Activated CD4-positive, alpha-beta memory T cell treated with anti-CD3 and anti-CD28 coated beads for 36 hours (primary cell): ENCODE measurements at regions of chr13 and their contacts with region 1.

Region 1: DNA sequence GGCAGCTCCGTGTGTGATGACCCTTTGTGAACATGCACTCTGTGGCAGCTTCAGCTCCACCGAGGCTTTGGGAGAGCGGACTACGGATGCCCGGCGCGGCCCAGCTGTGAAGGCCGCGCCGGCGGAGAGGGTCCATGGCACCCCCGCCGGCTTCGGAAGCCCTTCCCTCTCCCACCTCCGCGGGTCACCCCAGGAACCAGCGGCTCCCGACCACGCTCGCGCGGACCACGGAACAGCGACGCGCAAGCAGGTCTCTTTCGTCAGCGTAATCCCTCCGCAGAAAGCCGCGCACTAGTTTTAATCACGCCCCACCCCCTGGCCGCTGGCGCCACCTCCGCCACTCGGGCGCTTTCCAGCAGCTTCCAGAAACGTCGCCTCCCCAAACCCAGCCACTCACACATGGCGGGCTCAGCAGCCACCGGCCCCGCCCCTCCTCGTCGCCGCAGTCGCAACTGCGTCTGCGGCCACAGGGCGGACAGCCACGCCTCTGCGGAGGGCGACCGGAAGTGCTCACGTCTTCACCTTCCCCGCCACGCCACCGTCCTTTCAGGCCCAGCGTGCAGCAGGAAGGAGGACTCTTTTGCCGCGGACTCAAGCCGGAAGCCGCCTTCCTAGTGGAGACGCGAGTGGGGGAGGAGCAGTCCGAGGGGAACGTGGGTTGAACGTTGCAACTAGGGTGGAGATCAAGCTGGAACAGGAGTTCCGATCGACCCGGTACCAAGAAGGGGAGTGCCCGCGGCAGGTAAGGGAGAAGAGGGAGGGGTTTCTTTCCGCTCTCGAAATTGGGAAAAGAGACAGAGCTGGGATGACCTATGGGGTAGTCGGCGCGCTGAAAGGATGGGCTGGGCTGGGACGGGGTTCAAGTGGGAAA is at the start of gene USPL1:
- DNase-seq: peak; percentile 99
- H3K4me3 Mint-ChIP-seq: no peak within 1 kb of the TSS
- H3K27ac Mint-ChIP-seq: no peak within 1 kb of the TSS
- H3K4me1 Mint-ChIP-seq: peaks cover 26% of the 10 kb centered on the region
- H3K27me3 Mint-ChIP-seq: no peaks in the 10 kb centered on the region
- total RNA-seq, gene USPL1: 13.3 to 13.8 TPM

Region 2: GRCh38 chr13:30132623-30133553 is 484.7 kb before region 1 on chr13:
- CTCF ChIA-PET with region 1: interaction called, 12 read pairs
- POLR2A ChIA-PET with region 1: no interaction called
- intact Hi-C with region 1: no loop called
- DNase-seq: peak; percentile 98
- H3K4me3 Mint-ChIP-seq: no peak overlapping the region
- H3K27ac Mint-ChIP-seq: no peak overlapping the region
- H3K4me1 Mint-ChIP-seq: peaks cover 11% of the 10 kb centered on the region
- H3K27me3 Mint-ChIP-seq: no peaks in the 10 kb centered on the region

Region 3: DNA sequence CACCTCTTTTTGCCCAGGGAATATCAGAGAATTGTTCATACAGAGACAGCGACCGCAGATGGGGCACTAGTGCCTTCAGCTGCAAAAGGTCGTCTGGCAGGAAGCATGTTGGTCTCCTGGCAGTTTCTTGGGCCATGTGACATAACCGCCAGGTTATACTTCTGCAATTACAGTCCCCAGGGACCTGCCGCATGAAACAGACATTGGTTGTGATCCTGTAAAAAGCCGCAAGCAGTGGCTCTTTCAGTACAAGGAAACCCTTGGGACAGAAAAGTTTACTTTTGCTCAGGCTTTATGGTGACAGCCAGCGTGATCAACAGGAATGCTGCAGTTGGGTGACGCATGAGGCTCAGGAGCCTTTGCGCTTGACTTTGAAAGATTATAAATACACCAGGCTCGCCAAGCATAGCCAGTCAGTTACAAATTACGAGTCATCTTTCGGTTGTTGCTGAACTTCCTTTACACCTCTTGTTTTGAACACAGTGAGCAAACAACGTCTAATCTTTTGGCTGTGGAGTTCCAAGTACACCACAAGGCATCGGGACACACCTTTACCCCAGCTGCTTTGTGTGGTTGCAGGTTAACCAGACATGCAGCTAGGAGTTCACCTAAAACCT is 245.8 kb before region 1 on chr13:
- CTCF ChIA-PET with region 1: no interaction called
- POLR2A ChIA-PET with region 1: interaction called, 9 read pairs
- intact Hi-C with region 1: loop called (anchors 1 kb)
- DNase-seq: peak; percentile 84
- H3K4me3 Mint-ChIP-seq: peak overlapping the region; percentile 55
- H3K27ac Mint-ChIP-seq: peak overlapping the region; percentile 82
- H3K4me1 Mint-ChIP-seq: peaks cover 79% of the 10 kb centered on the region
- H3K27me3 Mint-ChIP-seq: no peaks in the 10 kb centered on the region

Region 4: DNA sequence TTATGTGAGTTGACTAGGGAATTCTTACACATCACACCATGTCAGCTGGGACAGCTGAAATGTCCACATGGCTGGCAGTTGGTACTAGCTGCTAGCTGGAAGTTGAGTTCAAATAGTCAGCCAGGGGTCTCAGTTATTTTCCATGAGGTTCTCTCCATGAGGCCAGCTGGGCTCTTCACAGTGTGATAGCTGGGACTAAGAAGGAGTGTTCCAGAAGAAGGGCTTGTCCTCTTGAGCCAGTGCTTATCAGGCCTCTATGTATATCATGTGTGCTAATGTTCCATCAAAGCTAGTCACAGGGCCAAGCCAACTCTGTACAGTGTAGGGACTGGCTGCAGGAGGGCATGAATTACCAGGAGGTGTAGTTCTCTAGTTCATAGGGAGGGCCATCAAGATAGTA is 12.0 kb after region 1 on chr13:
- CTCF ChIA-PET with region 1: interaction called, 7 read pairs
- POLR2A ChIA-PET with region 1: interaction called, 6 read pairs
- intact Hi-C with region 1: loop called (anchors 1 kb)
- DNase-seq: no peak
- H3K4me3 Mint-ChIP-seq: no peak overlapping the region
- H3K27ac Mint-ChIP-seq: no peak overlapping the region
- H3K4me1 Mint-ChIP-seq: peaks cover 36% of the 10 kb centered on the region
- H3K27me3 Mint-ChIP-seq: no peaks in the 10 kb centered on the region

Region 5: DNA sequence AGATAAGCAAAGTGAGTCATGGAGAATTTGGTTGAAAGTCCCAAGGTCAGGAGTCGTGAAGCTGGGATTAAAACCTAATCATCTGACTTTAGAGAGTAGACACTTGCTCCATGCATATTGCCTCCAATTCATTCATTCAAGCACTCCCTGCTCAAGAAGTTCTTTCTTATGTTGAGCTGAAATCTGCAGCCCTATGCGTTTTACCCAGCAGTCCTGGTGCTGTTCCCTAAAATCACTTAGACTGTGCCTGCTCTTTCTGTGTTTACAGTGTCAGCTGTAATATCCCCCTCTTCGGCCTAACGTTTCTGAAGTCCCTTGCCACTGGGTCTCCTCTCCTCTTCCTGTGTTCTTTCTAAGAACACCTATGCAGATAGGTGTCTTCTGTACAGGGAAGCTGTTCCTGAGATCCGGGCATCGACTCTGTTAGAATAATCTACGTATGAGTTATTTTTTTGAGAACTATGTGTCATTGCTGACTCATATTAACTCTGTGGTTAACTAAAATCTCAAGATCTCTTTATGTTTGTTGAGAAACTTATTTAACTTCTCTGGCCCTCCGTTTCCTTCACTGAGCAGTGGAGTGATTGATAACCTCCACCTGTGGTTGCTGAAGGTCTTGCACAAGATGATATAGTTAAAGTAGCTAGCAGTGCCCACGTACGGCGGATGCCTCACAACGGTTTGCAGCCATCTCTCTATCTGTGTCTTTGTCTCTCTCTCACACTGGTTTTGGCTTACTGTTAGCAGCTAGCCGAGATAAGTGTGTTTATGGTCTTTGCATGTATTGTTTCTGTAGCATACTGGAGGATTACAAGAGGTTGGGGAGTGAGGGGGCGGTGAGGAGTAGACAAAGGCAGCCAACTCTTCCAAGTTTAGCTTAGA is 122.5 kb after region 1 on chr13:
- CTCF ChIA-PET with region 1: interaction called, 4 read pairs
- POLR2A ChIA-PET with region 1: interaction called, 11 read pairs
- intact Hi-C with region 1: loop called (anchors 1 kb)
- DNase-seq: peak; percentile 83
- H3K4me3 Mint-ChIP-seq: peak overlapping the region; percentile 69
- H3K27ac Mint-ChIP-seq: peak overlapping the region; percentile 87
- H3K4me1 Mint-ChIP-seq: peaks cover 76% of the 10 kb centered on the region
- H3K27me3 Mint-ChIP-seq: peaks cover 2% of the 10 kb centered on the region

Region 6: DNA sequence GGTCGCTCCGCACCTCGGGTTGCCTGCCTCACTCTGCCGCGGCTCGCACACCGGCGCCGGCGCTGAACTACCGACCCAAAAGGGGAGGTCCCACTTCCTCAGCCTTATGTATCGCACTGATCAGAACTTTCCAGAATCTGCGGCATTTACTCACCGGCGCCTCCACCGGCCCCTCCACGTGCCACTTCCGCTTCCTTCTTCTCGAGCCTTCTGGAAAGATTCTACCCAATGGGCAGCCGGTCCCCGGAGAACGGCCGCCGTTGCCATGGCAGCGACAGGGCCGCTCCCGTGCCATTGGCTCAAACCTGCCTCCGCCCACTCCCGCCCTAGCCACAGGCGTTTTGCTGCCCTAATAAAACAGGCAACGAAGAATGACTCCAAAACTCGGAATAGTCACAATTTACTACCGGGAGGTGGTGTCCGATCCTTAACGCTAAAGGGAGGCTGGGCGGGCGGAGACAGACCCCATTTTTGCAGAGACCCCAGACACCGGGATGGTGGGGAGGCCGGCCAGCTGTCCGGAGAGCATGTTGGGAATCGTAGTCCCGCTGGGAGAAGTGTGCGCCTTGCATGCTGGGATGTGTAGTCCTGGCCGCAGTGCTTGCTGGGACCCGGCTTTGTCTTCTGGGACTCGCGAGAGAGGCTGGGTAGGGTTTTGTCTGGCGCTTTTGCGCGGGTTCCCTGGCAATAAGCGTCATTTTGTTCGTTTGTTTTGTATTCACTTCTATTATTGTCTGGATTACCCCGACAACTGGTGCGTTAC is 544.5 kb after region 1 on chr13 and contains the start of gene HSPH1:
- CTCF ChIA-PET with region 1: no interaction called
- POLR2A ChIA-PET with region 1: no interaction called
- intact Hi-C with region 1: loop called (anchors 1 kb)
- DNase-seq: peak; percentile 99
- H3K4me3 Mint-ChIP-seq: peak within 1 kb of the TSS; percentile 92
- H3K27ac Mint-ChIP-seq: peak within 1 kb of the TSS; percentile 99
- H3K4me1 Mint-ChIP-seq: peaks cover 35% of the 10 kb centered on the region
- H3K27me3 Mint-ChIP-seq: no peaks in the 10 kb centered on the region
- total RNA-seq, gene HSPH1: 214 to 221 TPM